ENCODE measurements at regions of chr18 and their contacts with region 1.

Region 1: GRCh38 chr18:68847219-68847837 is 49.4 kb downstream of the CCDC102B start:
- DNase-seq: no peak
- H3K4me3 ChIP-seq: no peak overlapping the region
- H3K27ac ChIP-seq: no peak overlapping the region
- H3K4me1 ChIP-seq: no peaks in the 10 kb centered on the region
- H3K27me3 ChIP-seq: no peaks in the 10 kb centered on the region
- CTCF ChIP-seq: peak; percentile 69

Region 2: DNA sequence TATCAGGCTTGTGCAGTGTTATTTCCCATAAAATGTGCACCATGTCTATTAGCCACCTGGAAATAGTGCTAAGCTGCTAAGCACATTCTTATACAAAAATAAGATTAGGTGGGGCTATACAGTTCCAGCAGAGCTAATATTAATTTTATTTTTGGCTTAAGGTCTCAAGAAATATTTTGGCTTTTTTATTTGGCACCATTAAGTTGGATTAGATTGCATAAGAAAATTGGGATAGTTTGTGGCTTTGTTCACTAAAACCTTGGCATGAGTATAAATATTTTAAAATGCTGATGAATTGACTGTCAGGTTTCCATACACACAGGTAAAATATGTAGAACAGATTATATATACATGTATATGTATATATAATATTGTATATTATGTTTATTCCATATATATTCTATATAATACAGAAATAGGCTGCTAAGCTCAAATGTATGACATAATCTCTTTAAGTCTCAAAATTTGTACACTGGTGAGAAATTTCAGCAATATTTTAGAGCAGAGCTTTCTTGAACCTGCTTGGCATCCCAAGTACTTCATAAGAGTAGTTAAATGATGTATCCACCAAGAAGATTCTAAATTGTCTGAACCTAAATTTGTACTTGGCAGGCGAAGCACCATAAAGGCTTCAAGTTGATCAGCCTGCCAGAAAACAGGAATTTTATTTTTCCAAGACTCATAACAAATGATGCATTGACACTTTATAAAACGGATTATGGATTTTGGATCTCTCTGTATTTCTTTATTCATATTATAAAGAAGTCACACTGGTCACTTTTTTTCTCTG is 16.9 kb before region 1 on chr18:
- intact Hi-C with region 1: no loop called
- DNase-seq: no peak
- H3K4me3 ChIP-seq: no peak overlapping the region
- H3K27ac ChIP-seq: no peak overlapping the region
- H3K4me1 ChIP-seq: no peaks in the 10 kb centered on the region
- H3K27me3 ChIP-seq: no peaks in the 10 kb centered on the region
- CTCF ChIP-seq: no peak

Region 3: DNA sequence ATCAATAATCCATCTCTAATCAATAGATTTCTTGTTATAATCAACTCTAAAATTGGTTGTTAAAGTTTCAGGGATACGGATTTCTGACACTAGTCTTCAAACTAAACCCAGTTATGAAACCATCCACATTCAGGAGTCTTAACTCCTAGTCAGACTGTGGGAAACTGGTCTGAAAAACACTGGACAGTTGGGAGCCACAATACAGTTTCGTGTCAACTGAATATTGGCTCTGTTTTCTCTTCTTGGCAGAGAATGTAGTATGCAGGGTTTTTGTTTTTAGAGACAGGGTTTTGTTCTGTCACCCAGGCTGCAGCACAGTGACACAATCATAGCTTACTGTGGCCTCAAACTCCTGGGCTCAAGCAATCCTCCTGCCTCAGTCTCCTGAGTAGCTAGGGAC is 1235.1 kb after region 1 on chr18:
- intact Hi-C with region 1: loop called (anchors 10 kb)
- DNase-seq: no peak
- H3K4me3 ChIP-seq: no peak overlapping the region
- H3K27ac ChIP-seq: no peak overlapping the region
- H3K4me1 ChIP-seq: peaks cover 3% of the 10 kb centered on the region
- H3K27me3 ChIP-seq: no peaks in the 10 kb centered on the region
- CTCF ChIP-seq: no peak